ENCODE measurements at regions of chr13 and their contacts with region 1.

Region 1: DNA sequence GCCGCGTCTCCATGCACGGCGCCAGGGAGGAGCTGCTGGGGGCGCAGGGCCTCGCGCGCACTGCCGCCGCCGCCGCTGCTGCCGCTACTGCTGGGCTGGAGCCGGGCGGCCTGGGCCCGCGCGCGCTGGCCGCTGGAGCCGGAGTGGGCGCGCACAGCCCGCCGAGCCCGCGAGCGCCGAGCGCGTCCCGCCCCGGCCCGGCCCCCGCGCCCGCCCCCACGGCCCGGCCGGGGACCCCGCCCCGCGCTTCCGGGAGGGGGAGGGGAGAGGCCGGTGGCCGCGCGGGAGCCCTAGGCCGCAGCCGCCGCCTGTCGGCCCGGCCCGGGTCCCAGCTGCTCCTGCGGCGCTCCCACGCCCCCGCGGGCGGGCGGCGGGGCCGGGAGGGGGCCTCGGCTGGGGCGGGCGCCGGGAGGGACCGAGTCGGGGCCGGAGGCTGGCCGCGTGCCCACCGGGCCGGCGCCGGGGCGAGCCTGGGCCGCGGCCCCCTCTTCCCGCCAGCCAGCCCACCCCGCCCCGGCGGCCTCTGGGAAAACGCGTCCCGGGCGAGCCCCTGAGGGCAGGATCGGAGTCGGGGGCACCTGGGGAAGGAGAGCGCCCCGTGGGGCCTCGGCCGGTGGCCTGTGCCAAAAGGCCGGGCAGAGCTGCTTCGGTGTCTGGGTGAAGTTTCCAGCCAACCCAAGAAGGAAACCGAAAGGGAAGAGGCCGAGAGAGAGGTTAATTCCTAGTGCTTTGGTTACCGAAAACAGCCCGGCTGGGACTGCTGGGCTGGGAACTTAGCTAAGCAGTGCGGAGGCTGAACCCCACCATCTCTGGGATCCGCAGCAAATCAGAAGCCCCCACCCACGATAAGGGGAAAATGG is at the start of gene STK24:
- DNase-seq: peak; percentile 66 to 71 (median 67)
- H3K4me3 ChIP-seq: peak within 1 kb of the TSS; percentile 69 to 89 (median 89)
- H3K4me3 Mint-ChIP-seq: peak within 1 kb of the TSS; percentile 90 to 97
- H3K27ac ChIP-seq: peak within 1 kb of the TSS; percentile 97
- H3K27ac Mint-ChIP-seq: peak within 1 kb of the TSS; percentile 97 to 99 (median 98)
- H3K4me1 ChIP-seq: peaks cover 33 to 46% of the 10 kb centered on the region in 2 donors
- H3K4me1 Mint-ChIP-seq: peaks cover 53% of the 10 kb centered on the region
- H3K27me3 ChIP-seq: no peaks in the 10 kb centered on the region
- H3K27me3 Mint-ChIP-seq: peaks cover 0 to 1% (median 0%) of the 10 kb centered on the region in 3 donors
- CTCF ChIP-seq: no peak
- polyA plus RNA-seq, gene STK24: 14.2 to 59.8 (median 28.9) TPM

Region 2: GRCh38 chr13:97889803-97890202 is 687.4 kb before region 1 on chr13:
- intact Hi-C with region 1: no loop called
- DNase-seq: no peak
- H3K4me3 ChIP-seq: no peak overlapping the region
- H3K4me3 Mint-ChIP-seq: no peak overlapping the region
- H3K27ac ChIP-seq: no peak overlapping the region
- H3K27ac Mint-ChIP-seq: no peak overlapping the region
- H3K4me1 ChIP-seq: no peaks in the 10 kb centered on the region
- H3K4me1 Mint-ChIP-seq: no peaks in the 10 kb centered on the region
- H3K27me3 ChIP-seq: no peaks in the 10 kb centered on the region
- H3K27me3 Mint-ChIP-seq: peaks cover 0 to 2% (median 2%) of the 10 kb centered on the region in 3 donors
- CTCF ChIP-seq: no peak

Region 3: DNA sequence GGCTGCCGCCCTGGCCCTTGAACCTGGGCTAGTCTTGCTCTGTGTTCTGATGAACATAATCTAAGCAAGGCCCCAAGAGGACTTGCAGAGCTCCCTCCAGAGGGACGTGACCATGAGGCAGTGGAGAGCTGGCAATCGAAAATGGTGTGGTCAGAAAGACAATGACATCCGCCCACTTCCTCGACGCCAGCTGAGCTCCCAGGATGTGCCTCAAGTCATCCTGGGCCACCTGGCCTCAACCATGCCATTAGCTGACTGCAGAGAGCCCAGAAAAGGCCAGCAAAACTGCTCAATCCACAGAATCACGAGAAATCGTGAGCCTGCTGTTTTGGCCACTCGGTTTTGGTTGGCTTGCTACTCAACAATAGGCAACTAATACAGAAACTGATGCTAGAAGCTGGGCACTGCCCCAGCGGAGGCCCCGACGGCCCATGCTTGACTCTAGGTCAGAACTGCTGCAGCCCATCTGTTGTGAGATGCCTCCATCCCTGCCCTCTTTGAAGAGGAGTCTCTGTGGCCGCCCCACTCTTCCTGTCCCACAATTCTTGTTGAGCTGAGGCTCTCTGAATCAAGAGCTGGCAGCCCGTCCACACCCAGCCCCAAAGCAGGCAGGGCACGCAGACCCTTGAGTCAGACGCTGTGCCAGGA is 53.6 kb before region 1 on chr13:
- intact Hi-C with region 1: no loop called
- DNase-seq: no peak
- H3K4me3 ChIP-seq: no peak overlapping the region
- H3K4me3 Mint-ChIP-seq: peak overlapping the region in 1 of 2 donors; percentile 12
- H3K27ac ChIP-seq: peak overlapping the region in 1 of 2 donors; percentile 41
- H3K27ac Mint-ChIP-seq: peak overlapping the region in 4 of 7 donors; percentile 6 to 80 (median 60)
- H3K4me1 ChIP-seq: peaks cover 8 to 16% of the 10 kb centered on the region in 2 donors
- H3K4me1 Mint-ChIP-seq: peaks cover 56% of the 10 kb centered on the region
- H3K27me3 ChIP-seq: no peaks in the 10 kb centered on the region
- H3K27me3 Mint-ChIP-seq: peaks cover 0 to 3% (median 0%) of the 10 kb centered on the region in 3 donors
- CTCF ChIP-seq: no peak

Region 4: GRCh38 chr13:98542568-98543377 is 34.4 kb before region 1 on chr13:
- intact Hi-C with region 1: loop called in 1 of 2 experiments (anchors 5 kb)
- DNase-seq: peak; percentile 36 to 68 (median 64)
- H3K4me3 ChIP-seq: peak overlapping the region; percentile 54 to 90 (median 75)
- H3K4me3 Mint-ChIP-seq: peak overlapping the region; percentile 93 to 99
- H3K27ac ChIP-seq: peak overlapping the region; percentile 86 to 95
- H3K27ac Mint-ChIP-seq: peak overlapping the region; percentile 87 to 96 (median 93)
- H3K4me1 ChIP-seq: peaks cover 41 to 51% of the 10 kb centered on the region in 2 donors
- H3K4me1 Mint-ChIP-seq: peaks cover 62% of the 10 kb centered on the region
- H3K27me3 ChIP-seq: no peaks in the 10 kb centered on the region
- H3K27me3 Mint-ChIP-seq: peaks cover 0 to 1% (median under 1%) of the 10 kb centered on the region in 3 donors
- CTCF ChIP-seq: no peak

Region 5: GRCh38 chr13:98648141-98648540 is 70.9 kb after region 1 on chr13:
- intact Hi-C with region 1: loop called in 1 of 2 experiments (anchors 5 kb)
- DNase-seq: no peak
- H3K4me3 ChIP-seq: no peak overlapping the region
- H3K4me3 Mint-ChIP-seq: no peak overlapping the region
- H3K27ac ChIP-seq: no peak overlapping the region
- H3K27ac Mint-ChIP-seq: peak overlapping the region in 3 of 7 donors; percentile 16 to 58 (median 30)
- H3K4me1 ChIP-seq: peaks cover 31 to 32% of the 10 kb centered on the region in 2 donors
- H3K4me1 Mint-ChIP-seq: peaks cover 39% of the 10 kb centered on the region
- H3K27me3 ChIP-seq: no peaks in the 10 kb centered on the region
- H3K27me3 Mint-ChIP-seq: peaks cover 1 to 14% (median 6%) of the 10 kb centered on the region in 3 donors
- CTCF ChIP-seq: no peak

Region 6: GRCh38 chr13:99471221-99472121 is 894.3 kb after region 1 on chr13:
- intact Hi-C with region 1: no loop called
- DNase-seq: peak in 2 of 3 donors; percentile 30 to 54
- H3K4me3 ChIP-seq: no peak overlapping the region
- H3K4me3 Mint-ChIP-seq: no peak overlapping the region
- H3K27ac ChIP-seq: peak overlapping the region in 1 of 2 donors; percentile 3
- H3K27ac Mint-ChIP-seq: peak overlapping the region in 6 of 7 donors; percentile 25 to 86 (median 68)
- H3K4me1 ChIP-seq: peaks cover 25 to 28% of the 10 kb centered on the region in 2 donors
- H3K4me1 Mint-ChIP-seq: peaks cover 34% of the 10 kb centered on the region
- H3K27me3 ChIP-seq: no peaks in the 10 kb centered on the region
- H3K27me3 Mint-ChIP-seq: peaks cover 0 to 3% (median 2%) of the 10 kb centered on the region in 3 donors
- CTCF ChIP-seq: no peak